ENCODE measurements at regions of chr12 and their contacts with region 1.

Region 1: DNA sequence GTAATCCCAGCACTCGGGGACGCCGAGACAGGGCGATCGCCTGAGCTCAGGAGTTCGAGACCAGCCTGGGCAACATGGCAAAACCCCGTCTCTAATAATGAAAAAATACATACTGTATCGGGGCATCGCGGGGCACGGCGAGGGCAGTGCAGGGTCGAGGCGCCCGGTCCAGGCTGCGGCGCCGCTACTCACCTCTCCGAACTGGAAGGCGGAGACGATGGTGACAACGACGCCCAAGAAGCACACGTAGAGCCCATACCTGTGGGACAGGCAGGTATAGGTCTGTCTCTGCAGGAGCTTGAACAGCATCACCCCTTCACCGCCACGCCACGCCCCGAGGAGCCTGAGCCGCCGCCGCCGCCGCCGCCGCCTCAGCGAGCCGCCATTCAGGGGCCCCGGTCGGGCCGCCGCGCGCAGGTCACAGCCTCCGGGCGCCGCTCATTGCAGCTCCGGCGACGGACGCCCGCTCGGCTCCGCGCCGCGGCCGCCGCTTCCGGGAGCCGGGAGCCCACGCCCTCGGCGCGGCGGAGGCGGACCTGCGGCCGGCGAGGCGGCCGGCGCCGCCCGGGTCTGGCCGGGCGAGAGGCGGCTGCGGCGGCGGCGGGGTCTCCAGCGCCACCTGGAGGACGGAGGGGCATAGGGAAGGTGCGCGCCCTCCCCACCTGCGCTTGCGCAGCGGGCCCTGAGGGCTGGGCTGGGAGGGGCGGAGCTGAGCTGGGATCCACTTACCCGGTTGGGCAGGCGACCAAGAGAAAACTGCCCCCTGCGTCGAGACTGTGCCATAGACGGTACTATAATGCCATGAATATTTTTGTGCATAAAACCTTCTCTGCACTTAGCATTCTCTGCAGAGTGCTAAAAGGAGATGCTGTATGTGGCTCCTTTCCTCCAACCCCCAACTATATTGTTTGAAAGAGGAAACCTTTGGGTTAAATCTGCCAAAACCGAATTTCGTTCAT is at the start of gene GNPTAB:
- DNase-seq: peak; percentile 90 to 98 (median 95)
- ATAC-seq: peak; percentile 88 to 95 (median 89)
- H3K4me3 ChIP-seq: peak within 1 kb of the TSS; percentile 87 to 91
- H3K4me3 Mint-ChIP-seq: peak within 1 kb of the TSS; percentile 94 to 98 (median 97)
- H3K27ac ChIP-seq: peak within 1 kb of the TSS; percentile 60
- H3K27ac Mint-ChIP-seq: peak within 1 kb of the TSS; percentile 89 to 91
- H3K4me1 ChIP-seq: peaks cover 19 to 33% of the 10 kb centered on the region in 2 experiments
- H3K4me1 Mint-ChIP-seq: peaks cover 40 to 53% (median 50%) of the 10 kb centered on the region in 3 donors
- H3K27me3 ChIP-seq: no peaks in the 10 kb centered on the region
- H3K27me3 Mint-ChIP-seq: no peaks in the 10 kb centered on the region
- total RNA-seq, gene GNPTAB: 44.9 to 66.8 (median 57.0) TPM

Region 2: DNA sequence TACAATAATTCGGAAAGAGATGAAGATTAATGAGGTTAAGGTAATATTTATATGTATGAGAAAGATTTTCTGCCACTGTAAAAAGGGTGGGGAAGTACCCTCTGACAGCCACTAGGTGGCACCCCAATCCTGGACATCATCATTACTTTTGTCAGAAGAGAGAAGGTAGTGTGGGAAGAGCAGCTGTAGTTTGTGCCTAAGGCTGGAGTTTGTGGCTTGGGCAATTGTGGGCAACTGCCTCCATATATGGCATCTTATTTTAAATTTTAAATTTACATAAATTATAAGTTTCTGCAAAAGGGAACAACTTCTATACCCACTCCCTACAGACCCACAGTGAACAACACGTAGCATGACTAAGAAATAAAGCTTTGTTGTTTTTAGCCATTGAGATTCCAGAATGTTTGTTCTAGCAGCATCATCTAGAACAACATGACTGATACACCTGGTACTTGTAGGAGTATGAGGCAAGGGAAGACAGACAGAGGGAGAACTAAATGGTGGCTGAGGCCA is 56.9 kb before region 1 on chr12:
- CTCF ChIA-PET with region 1: interaction called, 27 to 56 read pairs
- POLR2A ChIA-PET with region 1: interaction called in 1 of 2 experiments, 3 read pairs
- DNase-seq: peak; percentile 32 to 85 (median 60)
- ATAC-seq: peak; percentile 84 to 94 (median 90)
- H3K4me3 ChIP-seq: no peak overlapping the region
- H3K4me3 Mint-ChIP-seq: no peak overlapping the region
- H3K27ac ChIP-seq: no peak overlapping the region
- H3K27ac Mint-ChIP-seq: no peak overlapping the region
- H3K4me1 ChIP-seq: no peaks in the 10 kb centered on the region
- H3K4me1 Mint-ChIP-seq: peaks cover 0 to 7% (median 5%) of the 10 kb centered on the region in 3 donors
- H3K27me3 ChIP-seq: no peaks in the 10 kb centered on the region
- H3K27me3 Mint-ChIP-seq: no peaks in the 10 kb centered on the region

Region 3: GRCh38 chr12:101780599-101780998 is 50.0 kb before region 1 on chr12:
- CTCF ChIA-PET with region 1: interaction called in 1 of 2 experiments, 19 read pairs
- POLR2A ChIA-PET with region 1: interaction called, 5 to 14 read pairs
- DNase-seq: no peak
- ATAC-seq: no peak
- H3K4me3 ChIP-seq: no peak overlapping the region
- H3K4me3 Mint-ChIP-seq: no peak overlapping the region
- H3K27ac ChIP-seq: no peak overlapping the region
- H3K27ac Mint-ChIP-seq: peak overlapping the region in 1 of 2 donors; percentile 73
- H3K4me1 ChIP-seq: no peaks in the 10 kb centered on the region
- H3K4me1 Mint-ChIP-seq: peaks cover 2 to 8% (median 6%) of the 10 kb centered on the region in 3 donors
- H3K27me3 ChIP-seq: no peaks in the 10 kb centered on the region
- H3K27me3 Mint-ChIP-seq: no peaks in the 10 kb centered on the region

Region 4: DNA sequence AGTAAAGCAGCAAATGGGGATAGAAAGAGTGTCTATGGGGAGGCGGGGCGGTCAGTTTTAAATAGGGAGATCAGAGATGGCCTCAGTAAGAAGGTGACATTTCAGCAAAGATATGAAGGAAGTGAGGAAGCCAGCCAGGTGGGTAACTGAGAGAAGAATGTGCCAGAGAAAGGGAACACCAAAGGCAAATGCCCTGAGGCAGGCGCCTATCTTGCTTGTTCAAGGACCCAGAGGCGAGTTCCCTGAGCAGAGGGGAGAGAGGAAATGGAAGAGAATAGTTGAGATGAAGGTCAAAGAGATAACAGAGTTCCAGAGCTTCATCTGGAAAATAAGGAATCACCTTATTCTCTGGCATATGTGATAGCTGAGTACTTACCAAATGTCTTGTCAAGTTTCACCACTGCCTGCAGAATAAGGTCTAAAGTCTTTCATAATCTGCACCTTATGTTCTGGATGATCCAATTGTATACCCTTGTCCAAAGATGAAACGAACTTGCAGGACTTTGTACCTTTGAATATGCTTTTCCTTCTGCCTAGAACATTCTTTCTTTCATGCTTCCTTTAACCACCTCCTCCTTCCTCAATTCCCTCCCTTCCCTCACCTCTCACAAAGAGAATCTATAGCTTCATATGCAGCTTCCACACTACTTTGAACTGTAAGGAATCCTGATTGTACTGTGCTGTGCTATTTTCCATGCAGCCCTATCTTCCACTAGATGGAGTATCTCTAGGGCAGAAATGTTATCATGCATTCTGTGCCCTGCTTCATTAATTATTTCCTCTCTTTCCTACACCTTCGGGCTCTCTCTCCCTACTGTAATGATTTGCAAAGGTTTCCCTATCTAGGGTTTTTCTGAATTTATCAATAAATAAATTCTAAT is 38.4 kb before region 1 on chr12:
- CTCF ChIA-PET with region 1: interaction called, 5 to 27 read pairs
- POLR2A ChIA-PET with region 1: no interaction called
- DNase-seq: peak in 1 of 35 experiments; percentile 32
- ATAC-seq: peak in 2 of 4 experiments; percentile 40 to 67
- H3K4me3 ChIP-seq: no peak overlapping the region
- H3K4me3 Mint-ChIP-seq: no peak overlapping the region
- H3K27ac ChIP-seq: no peak overlapping the region
- H3K27ac Mint-ChIP-seq: peak overlapping the region in 1 of 2 donors; percentile 45
- H3K4me1 ChIP-seq: peaks cover 0 to 16% of the 10 kb centered on the region in 2 experiments
- H3K4me1 Mint-ChIP-seq: peaks cover 12 to 25% (median 19%) of the 10 kb centered on the region in 3 donors
- H3K27me3 ChIP-seq: no peaks in the 10 kb centered on the region
- H3K27me3 Mint-ChIP-seq: no peaks in the 10 kb centered on the region

Region 5: GRCh38 chr12:101885912-101886561 is 55.4 kb after region 1 on chr12:
- CTCF ChIA-PET with region 1: no interaction called
- POLR2A ChIA-PET with region 1: interaction called in 1 of 2 experiments, 12 read pairs
- DNase-seq: no peak
- ATAC-seq: no peak
- H3K4me3 ChIP-seq: no peak overlapping the region
- H3K4me3 Mint-ChIP-seq: no peak overlapping the region
- H3K27ac ChIP-seq: no peak overlapping the region
- H3K27ac Mint-ChIP-seq: no peak overlapping the region
- H3K4me1 ChIP-seq: no peaks in the 10 kb centered on the region
- H3K4me1 Mint-ChIP-seq: no peaks in the 10 kb centered on the region
- H3K27me3 ChIP-seq: no peaks in the 10 kb centered on the region
- H3K27me3 Mint-ChIP-seq: no peaks in the 10 kb centered on the region